ENCODE measurements at regions of chr2 and their contacts with region 1.

Region 1: DNA sequence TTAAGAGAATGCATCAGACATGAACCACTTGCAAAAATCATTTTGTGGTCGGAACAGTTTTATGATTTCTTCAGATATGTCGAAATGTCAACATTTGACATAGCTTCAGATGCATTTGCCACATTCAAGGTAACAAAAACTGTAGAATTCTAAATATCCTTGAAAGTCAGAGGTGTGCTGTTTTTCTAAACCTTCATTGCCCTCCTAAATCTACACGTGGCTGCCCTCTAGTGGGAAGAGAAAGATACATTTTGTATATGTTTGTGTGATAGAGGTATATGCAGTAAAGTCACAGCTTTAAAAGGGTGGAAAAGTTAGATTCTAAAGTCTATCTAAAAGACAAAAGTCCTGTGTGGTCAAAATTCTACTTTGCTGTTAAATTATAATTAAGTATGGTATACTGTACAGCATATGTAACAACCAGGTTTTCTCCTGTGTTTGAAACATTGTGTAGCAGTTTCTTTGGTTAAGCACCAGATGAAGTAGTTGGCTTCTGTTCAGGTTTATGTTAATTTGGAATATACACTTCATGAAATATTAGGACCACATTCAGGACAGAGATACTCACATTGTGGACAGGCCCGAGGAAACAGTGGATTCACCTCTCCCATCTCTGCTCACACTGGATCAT is 65.9 kb upstream of the ITM2C start:
- DNase-seq: no peak

Region 2: DNA sequence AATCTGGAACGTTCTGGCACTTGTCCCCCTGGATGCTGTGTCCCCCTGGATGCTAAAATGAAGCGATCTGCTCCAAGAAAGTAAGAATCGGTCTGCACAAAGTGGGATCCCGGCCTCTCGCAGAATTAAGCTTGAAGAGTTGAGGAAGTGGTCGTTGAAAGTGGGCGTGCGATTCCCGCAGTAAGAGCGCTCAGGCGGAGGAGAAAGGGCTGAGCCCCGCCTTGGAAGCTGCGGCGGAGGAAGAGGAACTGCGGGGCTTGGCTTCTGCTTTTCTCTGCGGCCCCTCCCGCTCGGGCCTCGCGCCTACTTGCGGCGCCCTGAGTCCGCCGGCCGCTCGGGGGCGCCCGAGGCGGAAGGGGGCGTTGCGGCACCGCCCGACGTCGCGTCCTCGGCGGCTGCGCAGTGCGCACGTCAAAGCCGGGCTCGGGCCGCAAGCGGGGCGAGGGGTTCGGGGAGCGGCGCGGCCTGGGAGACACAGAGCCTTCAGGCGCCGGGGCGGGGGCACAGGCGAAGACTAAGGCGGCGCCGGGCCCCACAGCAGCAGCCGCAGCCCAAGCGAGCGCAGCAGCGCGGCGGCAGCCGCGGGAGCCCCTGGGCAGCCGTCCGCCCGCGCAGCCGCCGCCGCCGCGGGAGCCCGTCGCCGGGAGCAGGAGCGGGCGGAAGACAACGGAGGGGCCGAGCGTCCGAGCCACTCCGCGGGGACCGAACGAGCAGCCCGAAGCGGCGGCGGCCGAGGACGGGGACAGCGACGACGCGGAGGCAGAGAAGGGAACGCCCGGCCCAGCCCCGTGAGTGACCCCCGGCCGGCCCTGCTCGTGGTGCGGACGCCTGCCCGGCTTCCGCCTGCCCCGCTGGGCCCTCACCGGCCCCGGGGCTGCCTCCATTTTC is 86.2 kb before region 1 on chr2 and contains the start of gene CAB39:
- intact Hi-C with region 1: loop called in 1 of 2 experiments (anchors 5 kb)
- DNase-seq: peak; percentile 96
- total RNA-seq, gene CAB39: 62.3 to 76.0 TPM

Region 3: DNA sequence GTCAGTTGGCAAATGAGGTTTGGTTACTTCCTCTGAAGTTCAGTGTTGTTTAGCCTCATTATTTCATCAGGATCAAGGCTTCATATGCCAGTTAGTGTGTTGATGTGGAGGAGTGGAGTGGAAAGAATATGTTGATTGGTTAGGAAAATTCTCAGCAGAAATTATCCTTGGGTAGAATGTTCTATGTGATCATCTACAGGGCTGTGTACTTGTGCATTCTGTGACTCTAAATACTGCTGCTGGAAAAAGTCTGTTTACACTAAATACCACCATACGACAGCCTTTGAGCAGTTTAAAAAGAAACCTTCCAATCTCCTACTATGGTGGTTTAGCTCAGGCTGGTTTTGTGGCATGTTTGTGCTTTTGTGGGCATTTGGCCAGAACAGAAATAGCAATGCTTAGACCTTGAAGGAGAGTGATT is 60.5 kb before region 1 on chr2:
- intact Hi-C with region 1: loop called in 1 of 2 experiments (anchors 10 kb)
- DNase-seq: no peak

Region 4: DNA sequence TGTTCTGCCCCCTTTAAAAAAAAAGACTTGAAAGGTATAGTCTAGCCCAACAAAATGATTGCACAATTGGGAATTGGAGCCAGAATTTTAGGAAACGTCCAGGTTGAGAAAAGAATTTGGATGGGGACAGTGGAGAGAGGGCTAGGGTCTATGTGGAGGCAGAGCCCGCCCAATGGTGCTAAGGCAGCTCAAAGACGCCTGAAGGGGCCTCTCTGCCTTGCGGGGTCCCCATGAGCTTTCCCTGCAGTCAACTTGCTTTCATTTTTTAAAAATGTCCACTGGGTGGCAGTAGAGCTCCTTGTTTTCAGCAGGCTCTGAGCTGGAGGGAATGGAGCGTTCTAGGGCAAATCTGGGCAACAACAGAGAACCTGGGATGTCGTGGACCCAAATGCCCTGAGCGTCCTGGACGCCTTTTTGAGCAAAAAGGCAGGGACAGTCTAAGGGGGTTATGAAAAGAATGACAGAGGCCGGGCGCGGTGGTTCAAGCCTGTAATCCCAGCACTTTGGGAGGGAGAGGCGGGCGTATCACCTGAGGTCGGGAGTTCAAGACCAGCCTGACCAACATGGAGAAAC is 25.6 kb after region 1 on chr2:
- intact Hi-C with region 1: no loop called
- DNase-seq: no peak

Region 5: GRCh38 chr2:232563580-232563979 is 1764.7 kb after region 1 on chr2:
- intact Hi-C with region 1: no loop called
- DNase-seq: no peak